ENCODE measurements at regions of chr12 and their contacts with region 1.

Region 1: DNA sequence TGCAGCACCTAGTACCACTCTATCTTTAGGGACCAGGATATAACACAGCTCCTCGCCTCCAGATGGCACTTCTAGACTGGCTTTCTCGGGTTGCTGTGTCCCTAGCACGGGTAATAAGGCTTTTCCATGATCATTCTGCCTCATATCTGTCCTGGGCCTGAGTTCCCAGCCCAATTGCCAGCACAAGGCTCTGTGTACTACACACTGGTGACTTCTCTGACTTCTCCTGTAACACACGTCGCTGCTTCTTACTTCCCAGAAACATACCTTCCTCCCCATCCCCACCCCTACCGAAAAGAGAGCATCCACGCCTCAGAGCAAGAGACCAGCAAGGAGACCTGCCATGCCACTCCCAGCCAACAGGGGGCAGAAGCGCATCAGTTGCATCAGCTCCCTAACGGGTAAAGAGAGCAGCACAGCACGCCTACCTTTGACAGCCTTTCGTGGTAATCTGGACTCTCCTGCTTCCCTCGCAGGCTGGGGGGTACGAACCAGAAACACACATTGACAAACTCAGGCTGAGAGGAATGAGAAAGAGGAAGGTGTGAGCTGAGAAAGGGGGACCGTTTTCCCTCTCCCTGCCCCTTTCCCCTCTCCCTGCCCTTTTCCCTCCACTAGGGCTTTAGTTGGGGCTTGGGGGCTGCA is 21.2 kb upstream of the ZNF740 start:
- DNase-seq: peak; percentile 83
- H3K4me3 Mint-ChIP-seq: no peak overlapping the region
- H3K27ac Mint-ChIP-seq: peak overlapping the region; percentile 62
- H3K4me1 Mint-ChIP-seq: peaks cover 7% of the 10 kb centered on the region
- H3K27me3 Mint-ChIP-seq: no peaks in the 10 kb centered on the region

Region 2: GRCh38 chr12:53174881-53175491 is 15.7 kb after region 1 on chr12:
- intact Hi-C with region 1: no loop called
- DNase-seq: no peak
- H3K4me3 Mint-ChIP-seq: no peak overlapping the region
- H3K27ac Mint-ChIP-seq: no peak overlapping the region
- H3K4me1 Mint-ChIP-seq: peaks cover 18% of the 10 kb centered on the region
- H3K27me3 Mint-ChIP-seq: no peaks in the 10 kb centered on the region

Region 3: DNA sequence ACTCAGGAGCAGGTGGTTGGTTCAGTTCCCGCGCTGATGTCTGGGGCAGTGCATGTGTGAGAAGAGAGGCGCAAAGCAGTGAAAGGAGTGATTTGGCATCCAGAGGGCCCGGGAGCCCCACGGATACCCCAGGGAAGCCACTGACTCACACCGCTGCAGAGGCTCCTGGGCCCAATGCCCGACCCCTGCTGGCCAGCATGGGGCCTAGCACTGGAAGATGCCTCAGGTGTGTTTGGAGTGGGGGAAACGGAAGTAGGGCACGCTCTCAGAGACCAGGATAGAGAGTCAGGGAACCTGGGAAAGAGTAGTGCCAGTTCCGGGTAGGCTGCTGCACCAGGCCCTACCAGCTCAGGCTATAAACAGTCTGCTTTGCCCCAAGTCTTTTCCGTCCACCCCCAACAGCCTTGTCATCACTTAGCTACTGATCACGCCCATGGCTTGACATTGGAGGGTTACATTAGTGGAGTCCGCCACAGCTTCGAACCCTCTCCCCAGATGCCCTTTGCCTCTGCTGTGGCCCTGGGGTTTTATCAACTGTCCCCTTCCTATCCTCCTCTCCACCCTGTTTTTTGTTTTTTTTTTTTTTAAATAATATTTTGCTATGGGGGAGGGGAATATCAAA is 30.9 kb after region 1 on chr12:
- intact Hi-C with region 1: loop called (anchors 1 kb)
- DNase-seq: no peak
- H3K4me3 Mint-ChIP-seq: no peak overlapping the region
- H3K27ac Mint-ChIP-seq: no peak overlapping the region
- H3K4me1 Mint-ChIP-seq: peaks cover 12% of the 10 kb centered on the region
- H3K27me3 Mint-ChIP-seq: no peaks in the 10 kb centered on the region

Region 4: GRCh38 chr12:53200458-53201176 is 41.3 kb after region 1 on chr12:
- intact Hi-C with region 1: loop called (anchors 5 kb)
- DNase-seq: no peak
- H3K4me3 Mint-ChIP-seq: peak overlapping the region; percentile 59
- H3K27ac Mint-ChIP-seq: peak overlapping the region; percentile 80
- H3K4me1 Mint-ChIP-seq: peaks cover 49% of the 10 kb centered on the region
- H3K27me3 Mint-ChIP-seq: no peaks in the 10 kb centered on the region

Region 5: GRCh38 chr12:53287741-53288216 is 128.5 kb after region 1 on chr12:
- intact Hi-C with region 1: loop called (anchors 2 kb)
- DNase-seq: peak; percentile 45
- H3K4me3 Mint-ChIP-seq: no peak overlapping the region
- H3K27ac Mint-ChIP-seq: peak overlapping the region; percentile 55
- H3K4me1 Mint-ChIP-seq: peaks cover 15% of the 10 kb centered on the region
- H3K27me3 Mint-ChIP-seq: no peaks in the 10 kb centered on the region

Region 6: DNA sequence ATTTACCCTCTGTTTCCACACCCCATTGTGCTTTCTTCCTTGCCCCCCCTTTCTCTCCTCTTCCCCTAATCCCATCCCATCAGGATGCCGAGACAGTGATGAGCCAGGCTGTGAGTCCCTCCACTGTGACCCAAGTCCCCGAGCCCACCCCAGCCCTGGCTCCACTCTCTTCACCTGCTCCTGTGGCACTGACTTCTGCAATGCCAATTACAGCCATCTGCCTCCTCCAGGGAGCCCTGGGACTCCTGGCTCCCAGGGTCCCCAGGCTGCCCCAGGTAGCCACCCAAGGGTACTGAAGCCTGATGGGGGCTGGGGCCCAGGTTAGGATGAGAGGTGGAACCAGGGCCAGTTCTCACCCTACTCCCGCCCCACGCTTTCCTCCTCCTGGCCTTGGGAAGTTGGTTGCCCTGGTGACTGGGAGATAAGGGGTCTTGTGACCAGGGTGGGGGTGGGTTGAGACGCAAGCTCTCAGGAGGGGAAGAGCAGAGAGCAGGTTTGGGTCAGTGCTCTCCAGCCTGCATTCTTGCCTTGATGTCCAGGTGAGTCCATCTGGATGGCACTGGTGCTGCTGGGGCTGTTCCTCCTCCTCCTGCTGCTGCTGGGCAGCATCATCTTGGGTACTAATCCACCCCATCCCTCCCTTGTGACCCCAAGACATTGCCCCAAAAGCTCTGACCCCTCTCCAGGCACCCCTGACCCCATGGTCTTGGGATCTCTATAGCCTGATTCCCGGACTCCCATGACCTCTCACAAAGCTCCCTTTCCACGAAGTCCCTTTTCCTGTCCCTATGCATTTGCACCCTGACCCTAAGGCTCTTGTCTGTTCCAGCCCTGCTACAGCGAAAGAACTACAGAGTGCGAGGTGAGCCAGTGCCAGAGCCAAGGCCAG is 265.6 kb after region 1 on chr12:
- intact Hi-C with region 1: loop called (anchors 1 kb)
- DNase-seq: no peak
- H3K4me3 Mint-ChIP-seq: no peak overlapping the region
- H3K27ac Mint-ChIP-seq: no peak overlapping the region
- H3K4me1 Mint-ChIP-seq: peaks cover 12% of the 10 kb centered on the region
- H3K27me3 Mint-ChIP-seq: no peaks in the 10 kb centered on the region

Measured in activated T-helper 2 cell treated with anti-CD3 and anti-CD28 coated beads, Interferon-gamma antibody, Interleukin-2, Interleukin-4, amounts not matched to agents 10 μg/mL and 5 μg/mL and 100 μg/mL, durations not matched to agents 14 hours and 24 hours and 36 hours (primary cell).